ENCODE measurements at regions of chr9 and their contacts with region 1.

Region 1: GRCh38 chr9:20152151-20152725 is 363.4 kb upstream of the SLC24A2 start:
- DNase-seq: no peak
- H3K4me3 ChIP-seq: no peak overlapping the region
- H3K27ac ChIP-seq: no peak overlapping the region
- H3K4me1 ChIP-seq: no peaks in the 10 kb centered on the region
- H3K27me3 ChIP-seq: no peaks in the 10 kb centered on the region
- CTCF ChIP-seq: no peak

Region 2: DNA sequence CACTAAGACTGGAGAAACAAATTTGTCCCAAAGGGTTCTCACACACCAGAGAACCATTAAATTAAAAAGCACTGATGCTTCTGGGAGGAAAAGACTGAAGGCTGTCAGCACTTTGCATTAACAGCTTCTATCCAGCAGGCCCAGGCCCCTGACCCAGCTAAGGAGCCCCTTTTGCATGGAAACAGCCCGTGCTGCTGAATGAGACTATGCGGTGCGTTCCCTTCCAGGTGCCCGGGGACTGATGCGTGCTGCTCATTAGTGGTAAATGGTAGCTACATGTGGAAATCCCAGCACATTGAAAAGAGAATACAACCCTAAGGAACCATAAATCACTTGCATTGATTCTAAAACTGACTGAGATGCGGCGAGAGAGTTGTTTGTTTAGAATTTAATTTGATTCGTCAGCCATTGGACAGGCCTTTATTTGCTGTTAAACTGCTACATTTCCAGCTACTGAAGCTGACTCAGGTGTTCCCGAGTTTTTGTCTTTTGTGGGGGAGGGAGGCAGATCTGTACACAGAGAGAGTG is 12.4 kb before region 1 on chr9:
- intact Hi-C with region 1: no loop called
- DNase-seq: no peak
- H3K4me3 ChIP-seq: no peak overlapping the region
- H3K27ac ChIP-seq: no peak overlapping the region
- H3K4me1 ChIP-seq: no peaks in the 10 kb centered on the region
- H3K27me3 ChIP-seq: no peaks in the 10 kb centered on the region
- CTCF ChIP-seq: no peak

Region 3: DNA sequence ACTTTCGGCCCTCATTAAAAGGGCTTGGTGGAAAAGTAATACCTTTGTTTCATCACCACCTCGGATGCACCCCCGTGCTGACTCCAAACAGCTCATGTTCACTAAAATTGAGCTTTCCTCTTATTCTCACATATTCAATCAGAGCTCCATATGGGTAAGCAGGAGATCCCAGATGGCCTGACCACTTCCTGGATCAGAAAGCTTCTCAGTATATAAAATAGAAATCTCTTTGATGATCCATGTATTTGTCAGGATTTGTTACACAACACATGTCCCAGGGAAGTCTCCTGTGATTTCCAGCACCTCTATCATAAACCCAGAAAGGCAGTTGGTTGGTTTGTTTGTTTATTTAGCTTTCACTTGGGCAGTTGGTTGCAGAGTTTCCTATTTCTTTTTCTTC is 68.0 kb after region 1 on chr9:
- intact Hi-C with region 1: loop called (anchors 10 kb)
- DNase-seq: no peak
- H3K4me3 ChIP-seq: no peak overlapping the region
- H3K27ac ChIP-seq: no peak overlapping the region
- H3K4me1 ChIP-seq: no peaks in the 10 kb centered on the region
- H3K27me3 ChIP-seq: no peaks in the 10 kb centered on the region
- CTCF ChIP-seq: no peak

Measured in ascending aorta (tissue), 2 donors.